RWPE1 (cell line): ENCODE measurements at regions of chr4 and their contacts with region 1.

Region 1: GRCh38 chr4:26081795-26082498 is 167.9 kb downstream of the SMIM20 start:
- DNase-seq: peak; percentile 35
- H3K27ac ChIP-seq: no peak overlapping the region
- CTCF ChIP-seq: peak; percentile 63

Region 2: GRCh38 chr4:25406081-25406692 is 675.8 kb before region 1 on chr4:
- CTCF ChIA-PET with region 1: no interaction called
- POLR2A ChIA-PET with region 1: no interaction called
- DNase-seq: no peak
- H3K27ac ChIP-seq: no peak overlapping the region
- CTCF ChIP-seq: no peak

Region 3: GRCh38 chr4:25993395-25994185 is 88.4 kb before region 1 on chr4:
- CTCF ChIA-PET with region 1: no interaction called
- POLR2A ChIA-PET with region 1: no interaction called
- DNase-seq: peak; percentile 17
- H3K27ac ChIP-seq: no peak overlapping the region
- CTCF ChIP-seq: no peak

Region 4: GRCh38 chr4:26235500-26235899 is 153.6 kb after region 1 on chr4:
- CTCF ChIA-PET with region 1: interaction called, 10 read pairs
- POLR2A ChIA-PET with region 1: no interaction called
- DNase-seq: peak; percentile 67
- H3K27ac ChIP-seq: peak overlapping the region; percentile 53; the same call in 1 of the 2 replicates
- CTCF ChIP-seq: no peak; the same call in 1 of the 2 replicates